Activated T-helper 2 cell treated with anti-CD3 and anti-CD28 coated beads, Interferon-gamma antibody, Interleukin-2, Interleukin-4, amounts not matched to agents 10 μg/mL and 5 μg/mL and 100 μg/mL, durations not matched to agents 14 hours and 24 hours and 36 hours (primary cell): ENCODE measurements at regions of chr12 and their contacts with region 1.

Region 1: DNA sequence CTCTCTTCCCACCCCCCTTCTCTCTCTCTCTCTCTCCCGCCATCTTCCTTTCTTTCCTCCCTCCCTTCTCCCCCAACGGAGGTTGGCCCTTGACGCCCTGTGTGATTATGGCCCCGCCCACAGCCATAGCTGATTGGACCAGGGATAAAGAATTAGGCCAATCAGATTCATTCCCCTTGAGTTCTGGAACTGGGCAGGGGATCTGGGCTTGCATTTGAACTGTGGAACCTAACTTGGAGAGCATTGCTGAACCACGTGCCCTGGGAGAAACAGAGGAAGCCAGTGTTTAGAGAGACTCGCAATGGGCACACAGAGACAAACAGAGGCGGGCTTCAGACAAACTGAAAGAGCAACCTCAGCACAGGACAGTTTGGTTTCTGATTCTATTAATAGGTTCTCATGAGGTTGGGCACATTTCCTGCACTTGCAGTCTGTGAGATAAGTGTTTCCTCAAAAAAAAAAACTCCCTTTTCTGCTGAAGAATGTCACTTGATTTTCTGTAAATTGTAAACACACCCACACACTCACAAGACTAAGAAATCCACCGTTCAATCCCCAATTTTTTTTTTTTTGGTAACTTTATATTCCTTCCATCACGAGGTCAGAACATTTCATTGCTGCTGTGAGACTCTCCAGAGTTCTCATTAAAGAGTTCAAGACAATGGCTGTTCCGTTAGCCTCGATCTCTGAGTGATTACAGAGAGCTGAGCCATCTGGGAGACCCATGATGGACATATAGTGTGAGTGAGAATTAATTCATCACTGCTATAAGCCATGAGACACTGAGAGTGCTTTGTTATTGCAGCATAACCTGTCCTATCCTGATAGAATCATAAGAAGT is 3.5 kb upstream of the P2RX7 start:
- DNase-seq: peak; percentile 83
- H3K4me3 Mint-ChIP-seq: peak overlapping the region; percentile 46
- H3K27ac Mint-ChIP-seq: peak overlapping the region; percentile 94
- H3K4me1 Mint-ChIP-seq: peaks cover 69% of the 10 kb centered on the region
- H3K27me3 Mint-ChIP-seq: no peaks in the 10 kb centered on the region

Region 2: GRCh38 chr12:121079736-121080272 is 49.4 kb before region 1 on chr12:
- intact Hi-C with region 1: no loop called
- DNase-seq: no peak
- H3K4me3 Mint-ChIP-seq: no peak overlapping the region
- H3K27ac Mint-ChIP-seq: no peak overlapping the region
- H3K4me1 Mint-ChIP-seq: no peaks in the 10 kb centered on the region
- H3K27me3 Mint-ChIP-seq: peaks cover 12% of the 10 kb centered on the region

Region 3: GRCh38 chr12:121102307-121102706 is 26.9 kb before region 1 on chr12:
- intact Hi-C with region 1: no loop called
- DNase-seq: no peak
- H3K4me3 Mint-ChIP-seq: no peak overlapping the region
- H3K27ac Mint-ChIP-seq: no peak overlapping the region
- H3K4me1 Mint-ChIP-seq: no peaks in the 10 kb centered on the region
- H3K27me3 Mint-ChIP-seq: peaks cover 14% of the 10 kb centered on the region

Region 4: DNA sequence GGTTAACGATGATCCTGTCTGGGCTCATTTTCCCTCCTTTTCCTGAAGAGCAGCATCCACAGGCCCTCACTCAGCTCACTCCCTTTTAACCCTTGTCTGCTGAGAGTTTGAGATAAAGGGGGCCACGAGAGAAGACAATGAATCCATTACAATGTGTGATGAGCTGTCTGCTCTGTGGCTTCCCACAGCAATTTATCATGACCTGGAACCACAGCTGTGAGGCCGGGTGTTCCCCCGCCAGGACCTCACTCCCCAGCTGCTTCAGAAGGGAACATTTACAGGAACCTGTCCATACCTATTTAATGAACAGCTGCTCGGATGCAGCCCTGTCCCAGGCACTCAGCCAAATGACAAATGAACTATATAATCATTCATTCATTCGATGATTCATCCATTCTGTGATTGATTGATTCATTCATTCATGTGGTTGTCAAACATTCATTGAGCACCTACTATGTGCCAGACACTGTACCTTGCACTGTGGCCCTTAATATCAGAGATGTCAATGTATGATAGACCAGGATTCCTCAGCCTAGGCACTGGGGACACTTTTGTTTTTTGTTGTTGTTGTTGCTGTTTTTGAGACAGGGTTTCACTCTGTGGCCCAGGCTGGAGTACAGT is 15.1 kb before region 1 on chr12:
- intact Hi-C with region 1: no loop called
- DNase-seq: no peak
- H3K4me3 Mint-ChIP-seq: no peak overlapping the region
- H3K27ac Mint-ChIP-seq: no peak overlapping the region
- H3K4me1 Mint-ChIP-seq: peaks cover 3% of the 10 kb centered on the region
- H3K27me3 Mint-ChIP-seq: no peaks in the 10 kb centered on the region

Region 5: GRCh38 chr12:121144416-121144914 is 15.3 kb after region 1 on chr12:
- intact Hi-C with region 1: loop called (anchors 1 kb)
- DNase-seq: no peak
- H3K4me3 Mint-ChIP-seq: peak overlapping the region; percentile 34
- H3K27ac Mint-ChIP-seq: peak overlapping the region; percentile 76
- H3K4me1 Mint-ChIP-seq: peaks cover 29% of the 10 kb centered on the region
- H3K27me3 Mint-ChIP-seq: no peaks in the 10 kb centered on the region

Region 6: DNA sequence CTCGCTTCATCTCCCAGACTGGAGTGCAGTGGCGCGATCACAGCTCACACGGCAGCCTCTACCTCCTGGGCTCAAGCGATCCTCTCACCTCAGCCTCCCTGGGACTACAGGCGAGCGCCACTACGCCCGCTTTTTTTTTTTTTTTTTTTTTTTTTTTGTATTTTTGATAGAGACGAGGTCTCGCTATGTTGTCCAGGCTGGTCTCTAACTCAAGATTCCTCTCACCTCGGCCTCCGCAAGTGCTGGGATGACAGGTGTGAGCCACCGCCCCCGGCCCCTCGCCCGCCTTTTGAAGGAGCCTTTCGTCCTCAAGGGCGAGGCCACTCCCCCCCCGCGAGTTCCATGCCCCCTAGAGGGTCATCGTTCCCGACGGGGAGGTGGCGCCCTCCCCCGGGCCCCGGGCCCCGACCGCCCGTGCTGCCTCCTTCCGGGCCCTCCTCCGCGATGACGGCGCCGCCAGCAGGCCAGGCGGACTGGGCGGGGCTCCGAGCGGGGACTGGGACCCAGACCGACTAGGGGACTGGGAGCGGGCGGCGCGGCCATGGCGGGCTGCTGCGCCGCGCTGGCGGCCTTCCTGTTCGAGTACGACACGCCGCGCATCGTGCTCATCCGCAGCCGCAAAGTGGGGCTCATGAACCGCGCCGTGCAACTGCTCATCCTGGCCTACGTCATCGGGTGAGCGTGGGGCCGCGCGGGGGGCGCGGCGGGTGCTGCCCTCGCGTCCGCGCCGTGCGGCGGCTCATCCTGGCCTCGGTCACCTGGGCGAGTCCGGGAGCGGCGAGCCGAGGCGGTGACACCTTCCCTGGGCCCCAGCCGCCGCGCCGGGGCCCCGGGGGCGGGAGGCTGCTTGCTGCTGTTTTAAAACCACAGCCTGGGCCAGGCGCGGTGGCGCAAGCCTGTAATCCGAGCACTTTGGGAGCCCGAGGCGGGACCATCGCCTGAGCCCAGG is 80.7 kb after region 1 on chr12 and contains the start of gene P2RX4:
- intact Hi-C with region 1: loop called (anchors 2 kb)
- DNase-seq: peak; percentile 85
- H3K4me3 Mint-ChIP-seq: peak within 1 kb of the TSS; percentile 95
- H3K27ac Mint-ChIP-seq: peak within 1 kb of the TSS; percentile 97
- H3K4me1 Mint-ChIP-seq: peaks cover 32% of the 10 kb centered on the region
- H3K27me3 Mint-ChIP-seq: no peaks in the 10 kb centered on the region
- total RNA-seq, gene P2RX4: 25.1 and 25.2 TPM in 2 replicates